ENCODE measurements at regions of chr10 and their contacts with region 1.

Region 1: GRCh38 chr10:71771821-71772617 is 1.3 kb downstream of the VSIR start:
- DNase-seq: no peak
- H3K4me3 Mint-ChIP-seq: peak overlapping the region; percentile 84
- H3K27ac Mint-ChIP-seq: peak overlapping the region; percentile 90
- H3K4me1 Mint-ChIP-seq: peaks cover 82% of the 10 kb centered on the region
- H3K27me3 Mint-ChIP-seq: no peaks in the 10 kb centered on the region

Region 2: GRCh38 chr10:71372882-71373495 is 399.0 kb before region 1 on chr10:
- intact Hi-C with region 1: loop called (anchors 1 kb)
- DNase-seq: no peak
- H3K4me3 Mint-ChIP-seq: no peak overlapping the region
- H3K27ac Mint-ChIP-seq: no peak overlapping the region
- H3K4me1 Mint-ChIP-seq: peaks cover 14% of the 10 kb centered on the region
- H3K27me3 Mint-ChIP-seq: peaks cover 7% of the 10 kb centered on the region

Region 3: GRCh38 chr10:71696628-71697326 is 75.2 kb before region 1 on chr10:
- intact Hi-C with region 1: loop called (anchors 1 kb)
- DNase-seq: peak; percentile 41
- H3K4me3 Mint-ChIP-seq: no peak overlapping the region
- H3K27ac Mint-ChIP-seq: no peak overlapping the region
- H3K4me1 Mint-ChIP-seq: peaks cover 53% of the 10 kb centered on the region
- H3K27me3 Mint-ChIP-seq: no peaks in the 10 kb centered on the region

Region 4: GRCh38 chr10:71727738-71728737 is 44.0 kb before region 1 on chr10:
- intact Hi-C with region 1: loop called (anchors 1 kb)
- DNase-seq: peak; percentile 51
- H3K4me3 Mint-ChIP-seq: peak overlapping the region; percentile 59
- H3K27ac Mint-ChIP-seq: peak overlapping the region; percentile 99
- H3K4me1 Mint-ChIP-seq: peaks cover 66% of the 10 kb centered on the region
- H3K27me3 Mint-ChIP-seq: no peaks in the 10 kb centered on the region

Region 5: GRCh38 chr10:71748671-71749191 is 23.3 kb before region 1 on chr10:
- intact Hi-C with region 1: loop called (anchors 1 kb)
- DNase-seq: peak; percentile 79
- H3K4me3 Mint-ChIP-seq: peak overlapping the region; percentile 76
- H3K27ac Mint-ChIP-seq: peak overlapping the region; percentile 99
- H3K4me1 Mint-ChIP-seq: peaks cover 95% of the 10 kb centered on the region
- H3K27me3 Mint-ChIP-seq: no peaks in the 10 kb centered on the region

Region 6: GRCh38 chr10:71850637-71851464 is 78.8 kb after region 1 on chr10 and contains the start of gene PSAP:
- intact Hi-C with region 1: loop called (anchors 1 kb)
- DNase-seq: peak; percentile 99
- H3K4me3 Mint-ChIP-seq: peak within 1 kb of the TSS; percentile 97
- H3K27ac Mint-ChIP-seq: peak within 1 kb of the TSS; percentile 85
- H3K4me1 Mint-ChIP-seq: peaks cover 42% of the 10 kb centered on the region
- H3K27me3 Mint-ChIP-seq: no peaks in the 10 kb centered on the region
- total RNA-seq, gene PSAP: 117 and 122 TPM in 2 replicates